Tibial artery (tissue), 4 donors: ENCODE measurements at regions of chr17 and their contacts with region 1.

Region 1: GRCh38 chr17:40153603-40154236 is 13.4 kb downstream of the CASC3 start:
- DNase-seq: no peak
- H3K4me3 ChIP-seq: no peak overlapping the region
- H3K27ac ChIP-seq: no peak overlapping the region
- H3K4me1 ChIP-seq: peaks cover 0 to 40% (median 8%) of the 10 kb centered on the region in 4 donors
- H3K27me3 ChIP-seq: no peaks in the 10 kb centered on the region
- CTCF ChIP-seq: no peak

Region 2: GRCh38 chr17:42002792-42003301 is 1849.1 kb after region 1 on chr17:
- intact Hi-C with region 1: loop called (anchors 5 kb)
- DNase-seq: no peak
- H3K4me3 ChIP-seq: no peak overlapping the region
- H3K27ac ChIP-seq: no peak overlapping the region
- H3K4me1 ChIP-seq: peaks cover 0 to 11% (median 2%) of the 10 kb centered on the region in 4 donors
- H3K27me3 ChIP-seq: no peaks in the 10 kb centered on the region
- CTCF ChIP-seq: no peak